CD8-positive, alpha-beta memory T cell (primary cell): ENCODE measurements at regions of chr1 and their contacts with region 1.

Region 1: GRCh38 chr1:234355782-234356510 is 17.3 kb upstream of the COA6 start:
- DNase-seq: no peak
- H3K4me3 ChIP-seq: no peak overlapping the region
- H3K4me3 Mint-ChIP-seq: peak overlapping the region in 6 of 7 donors; percentile 80 to 92 (median 86)
- H3K27ac ChIP-seq: no peak overlapping the region
- H3K27ac Mint-ChIP-seq: peak overlapping the region in 3 of 8 donors; percentile 15 to 87 (median 38)
- H3K4me1 ChIP-seq: no peaks in the 10 kb centered on the region
- H3K4me1 Mint-ChIP-seq: peaks cover 0 to 39% (median 7%) of the 10 kb centered on the region in 3 donors
- H3K27me3 ChIP-seq: no peaks in the 10 kb centered on the region
- H3K27me3 Mint-ChIP-seq: peaks cover 3 to 17% of the 10 kb centered on the region in 2 donors

Region 2: GRCh38 chr1:234260578-234260977 is 95.4 kb before region 1 on chr1:
- CTCF ChIA-PET with region 1: no interaction called
- POLR2A ChIA-PET with region 1: no interaction called
- DNase-seq: no peak
- H3K4me3 ChIP-seq: no peak overlapping the region
- H3K4me3 Mint-ChIP-seq: no peak overlapping the region
- H3K27ac ChIP-seq: no peak overlapping the region
- H3K27ac Mint-ChIP-seq: no peak overlapping the region
- H3K4me1 ChIP-seq: no peaks in the 10 kb centered on the region
- H3K4me1 Mint-ChIP-seq: peaks cover 6 to 9% (median 8%) of the 10 kb centered on the region in 3 donors
- H3K27me3 ChIP-seq: no peaks in the 10 kb centered on the region
- H3K27me3 Mint-ChIP-seq: peaks cover 4 to 25% of the 10 kb centered on the region in 2 donors

Region 3: DNA sequence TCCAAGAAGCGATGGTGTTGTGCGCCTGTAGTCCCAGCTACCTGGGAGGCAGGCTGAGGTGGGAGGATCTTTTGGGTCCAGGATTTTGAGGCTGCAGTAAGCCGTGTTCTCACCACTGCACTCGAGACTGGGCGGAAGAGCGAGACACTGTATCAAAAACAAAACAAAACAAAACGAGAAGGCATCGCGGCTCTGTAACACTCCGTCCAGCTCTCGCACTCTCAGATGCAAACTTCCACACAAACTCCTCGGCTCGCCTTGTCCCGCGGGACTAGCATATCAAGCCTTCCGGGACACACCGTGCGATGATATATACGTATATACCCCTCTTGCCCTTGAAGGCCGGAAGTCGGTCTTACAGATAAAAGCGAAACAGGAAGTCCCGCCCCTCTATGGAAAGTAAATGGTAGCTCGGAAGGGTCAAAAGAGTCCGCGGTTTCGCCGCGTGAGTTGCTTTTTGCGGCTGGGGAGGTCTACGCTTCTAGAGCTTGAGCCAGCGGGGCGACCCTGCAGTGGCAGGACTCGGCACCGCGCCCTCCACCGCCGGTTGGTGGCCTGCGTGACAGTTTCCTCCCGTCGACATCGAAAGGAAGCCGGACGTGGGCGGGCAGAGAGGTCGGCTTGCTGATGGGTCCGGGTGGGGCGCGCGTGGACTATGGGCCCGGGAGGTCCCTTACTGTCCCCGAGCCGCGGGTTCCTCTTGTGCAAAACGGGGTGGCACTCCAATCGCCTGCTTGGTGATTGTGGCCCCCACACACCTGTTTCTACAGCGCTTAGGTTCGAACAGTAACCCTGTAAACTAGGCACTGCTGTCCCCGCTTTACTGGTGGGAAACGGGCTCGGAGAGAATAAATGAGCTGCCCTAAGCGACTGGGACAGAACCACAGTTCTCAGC is 17.4 kb after region 1 on chr1 and contains the start of gene COA6:
- CTCF ChIA-PET with region 1: interaction called, 5 read pairs
- POLR2A ChIA-PET with region 1: interaction called, 22 read pairs
- DNase-seq: peak; percentile 83 to 92 (median 90)
- H3K4me3 ChIP-seq: peak within 1 kb of the TSS; percentile 97
- H3K4me3 Mint-ChIP-seq: peak within 1 kb of the TSS; percentile 89 to 98 (median 97)
- H3K27ac ChIP-seq: peak within 1 kb of the TSS; percentile 99
- H3K27ac Mint-ChIP-seq: peak within 1 kb of the TSS; percentile 95 to 100 (median 98)
- H3K4me1 ChIP-seq: peaks cover 30% of the 10 kb centered on the region
- H3K4me1 Mint-ChIP-seq: peaks cover 56 to 69% (median 57%) of the 10 kb centered on the region in 3 donors
- H3K27me3 ChIP-seq: no peaks in the 10 kb centered on the region
- H3K27me3 Mint-ChIP-seq: no peaks in the 10 kb centered on the region
- total RNA-seq, gene COA6: 49.1 to 51.9 TPM